ENCODE measurements at regions of chr4 and their contacts with region 1.

Region 1: GRCh38 chr4:103099691-103100392 is at the start of gene BDH2:
- DNase-seq: no peak
- ATAC-seq: peak; percentile 99
- H3K4me3 Mint-ChIP-seq: peak within 1 kb of the TSS; percentile 79
- H3K27ac Mint-ChIP-seq: peak within 1 kb of the TSS; percentile 63
- H3K4me1 Mint-ChIP-seq: peaks cover 14% of the 10 kb centered on the region
- H3K27me3 Mint-ChIP-seq: no peaks in the 10 kb centered on the region
- CTCF ChIP-seq: peak; percentile 37
- total RNA-seq, gene BDH2: 5.1 and 6.5 TPM in 2 replicates

Region 2: GRCh38 chr4:102344954-102345794 is 754.7 kb before region 1 on chr4 and contains the start of gene SLC39A8:
- CTCF ChIA-PET with region 1: no interaction called
- POLR2A ChIA-PET with region 1: no interaction called
- intact Hi-C with region 1: loop called (anchors 1 kb)
- DNase-seq: peak; percentile 82
- ATAC-seq: peak; percentile 87
- H3K4me3 Mint-ChIP-seq: peak within 1 kb of the TSS; percentile 89
- H3K27ac Mint-ChIP-seq: peak within 1 kb of the TSS; percentile 93
- H3K4me1 Mint-ChIP-seq: peaks cover 34% of the 10 kb centered on the region
- H3K27me3 Mint-ChIP-seq: no peaks in the 10 kb centered on the region
- CTCF ChIP-seq: no peak
- total RNA-seq, gene SLC39A8: 17.9 and 18.1 TPM in 2 replicates

Region 3: GRCh38 chr4:102449751-102450352 is 650.0 kb before region 1 on chr4:
- CTCF ChIA-PET with region 1: no interaction called
- POLR2A ChIA-PET with region 1: no interaction called
- intact Hi-C with region 1: loop called (anchors 1 kb)
- DNase-seq: no peak
- ATAC-seq: peak; percentile 85
- H3K4me3 Mint-ChIP-seq: no peak overlapping the region
- H3K27ac Mint-ChIP-seq: no peak overlapping the region
- H3K4me1 Mint-ChIP-seq: peaks cover 21% of the 10 kb centered on the region
- H3K27me3 Mint-ChIP-seq: no peaks in the 10 kb centered on the region
- CTCF ChIP-seq: no peak

Region 4: GRCh38 chr4:102687373-102687981 is 412.4 kb before region 1 on chr4:
- CTCF ChIA-PET with region 1: no interaction called
- POLR2A ChIA-PET with region 1: no interaction called
- intact Hi-C with region 1: loop called (anchors 10 kb)
- DNase-seq: no peak
- ATAC-seq: peak; percentile 74
- H3K4me3 Mint-ChIP-seq: no peak overlapping the region
- H3K27ac Mint-ChIP-seq: no peak overlapping the region
- H3K4me1 Mint-ChIP-seq: no peaks in the 10 kb centered on the region
- H3K27me3 Mint-ChIP-seq: no peaks in the 10 kb centered on the region
- CTCF ChIP-seq: no peak

Region 5: GRCh38 chr4:103019308-103020124 is 80.3 kb before region 1 on chr4 and contains the start of gene SLC9B1:
- CTCF ChIA-PET with region 1: no interaction called
- POLR2A ChIA-PET with region 1: interaction called, 7 read pairs
- intact Hi-C with region 1: loop called (anchors 1 kb)
- DNase-seq: peak; percentile 91
- ATAC-seq: peak; percentile 98
- H3K4me3 Mint-ChIP-seq: peak within 1 kb of the TSS; percentile 92
- H3K27ac Mint-ChIP-seq: peak within 1 kb of the TSS; percentile 96
- H3K4me1 Mint-ChIP-seq: peaks cover 28% of the 10 kb centered on the region
- H3K27me3 Mint-ChIP-seq: no peaks in the 10 kb centered on the region
- CTCF ChIP-seq: no peak
- total RNA-seq, gene SLC9B1: 1.2 and 2.5 TPM in 2 replicates

Region 6: GRCh38 chr4:103075901-103076739 is 23.7 kb before region 1 on chr4:
- CTCF ChIA-PET with region 1: interaction called, 4 read pairs
- POLR2A ChIA-PET with region 1: no interaction called
- intact Hi-C with region 1: loop called (anchors 1 kb)
- DNase-seq: peak; percentile 69
- ATAC-seq: peak; percentile 64
- H3K4me3 Mint-ChIP-seq: peak overlapping the region; percentile 96
- H3K27ac Mint-ChIP-seq: peak overlapping the region; percentile 99
- H3K4me1 Mint-ChIP-seq: peaks cover 45% of the 10 kb centered on the region
- H3K27me3 Mint-ChIP-seq: no peaks in the 10 kb centered on the region
- CTCF ChIP-seq: no peak